Activated B cell treated with CpG ODN at 0.5 μM for 24 hours (primary cell): ENCODE measurements at regions of chr18 and their contacts with region 1.

Region 1: DNA sequence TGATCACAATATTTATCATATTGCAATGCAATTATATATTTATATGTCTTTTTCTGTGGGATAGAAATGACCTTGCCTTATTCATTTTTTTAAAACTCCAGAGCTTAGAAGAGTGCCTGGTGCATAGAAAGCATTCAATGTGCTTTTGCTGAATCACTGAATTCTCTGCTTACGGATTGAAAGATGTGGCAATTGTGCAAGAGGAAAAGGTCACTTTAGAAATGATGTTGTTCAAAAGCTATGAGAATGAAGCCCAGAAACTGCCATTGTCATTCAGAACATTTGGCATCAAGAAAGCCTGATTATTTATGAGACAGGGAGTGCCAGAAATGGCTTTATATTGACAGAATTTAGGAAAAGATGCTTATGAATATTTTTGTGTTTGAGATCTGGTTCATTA is 678.6 kb upstream of the CDH2 start:
- DNase-seq: no peak
- ATAC-seq: no peak
- H3K4me3 Mint-ChIP-seq: no peak overlapping the region
- H3K27ac Mint-ChIP-seq: no peak overlapping the region
- H3K4me1 Mint-ChIP-seq: no peaks in the 10 kb centered on the region
- H3K27me3 Mint-ChIP-seq: no peaks in the 10 kb centered on the region
- CTCF ChIP-seq: no peak

Region 2: DNA sequence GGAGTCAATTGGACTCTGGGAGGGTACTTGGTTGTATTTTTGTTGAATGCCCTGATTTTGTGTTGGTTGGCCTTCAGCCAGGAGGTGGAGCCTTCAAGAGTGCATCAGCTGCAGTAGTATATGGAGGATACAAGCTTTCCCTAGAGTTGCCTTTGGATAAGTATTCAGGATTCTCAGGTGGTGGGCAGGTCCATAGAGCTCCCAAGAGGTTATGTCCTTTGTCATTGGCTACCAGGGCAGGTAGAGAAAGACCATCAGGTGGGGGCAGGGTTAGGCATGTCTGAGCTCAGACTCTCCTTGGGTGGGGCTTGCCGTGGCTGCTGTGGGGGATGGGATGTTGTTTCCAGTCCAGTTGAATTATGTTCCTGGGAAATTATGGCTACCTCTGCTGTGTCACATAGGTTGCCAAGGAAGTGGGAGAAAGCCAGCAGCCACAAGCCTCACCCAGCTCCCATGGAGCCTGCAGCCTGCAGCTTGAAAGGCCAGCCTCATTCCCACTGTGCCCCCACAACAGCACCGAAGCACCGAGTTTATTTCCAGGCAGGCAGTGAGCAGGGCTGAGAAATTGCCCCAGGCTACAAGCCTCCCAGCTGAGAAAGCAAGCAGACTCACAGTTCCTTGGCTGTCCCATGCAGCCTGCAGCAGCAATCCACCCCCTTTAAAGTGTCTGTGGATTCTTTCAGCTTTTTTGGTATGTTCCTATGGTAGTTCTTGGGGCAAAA is 1631.8 kb before region 1 on chr18:
- CTCF ChIA-PET with region 1: no interaction called
- POLR2A ChIA-PET with region 1: no interaction called
- intact Hi-C with region 1: no loop called
- DNase-seq: no peak
- ATAC-seq: no peak
- H3K4me3 Mint-ChIP-seq: no peak overlapping the region
- H3K27ac Mint-ChIP-seq: no peak overlapping the region
- H3K4me1 Mint-ChIP-seq: no peaks in the 10 kb centered on the region
- H3K27me3 Mint-ChIP-seq: no peaks in the 10 kb centered on the region
- CTCF ChIP-seq: no peak

Region 3: GRCh38 chr18:28512357-28512756 is 343.2 kb before region 1 on chr18:
- CTCF ChIA-PET with region 1: no interaction called
- POLR2A ChIA-PET with region 1: no interaction called
- intact Hi-C with region 1: no loop called
- DNase-seq: no peak
- ATAC-seq: no peak
- H3K4me3 Mint-ChIP-seq: no peak overlapping the region
- H3K27ac Mint-ChIP-seq: no peak overlapping the region
- H3K4me1 Mint-ChIP-seq: no peaks in the 10 kb centered on the region
- H3K27me3 Mint-ChIP-seq: no peaks in the 10 kb centered on the region
- CTCF ChIP-seq: no peak

Region 4: GRCh38 chr18:28916456-28916855 is 60.9 kb after region 1 on chr18:
- CTCF ChIA-PET with region 1: no interaction called
- POLR2A ChIA-PET with region 1: no interaction called
- intact Hi-C with region 1: loop called (anchors 2 kb)
- DNase-seq: no peak
- ATAC-seq: no peak
- H3K4me3 Mint-ChIP-seq: no peak overlapping the region
- H3K27ac Mint-ChIP-seq: no peak overlapping the region
- H3K4me1 Mint-ChIP-seq: no peaks in the 10 kb centered on the region
- H3K27me3 Mint-ChIP-seq: no peaks in the 10 kb centered on the region
- CTCF ChIP-seq: no peak

Region 5: DNA sequence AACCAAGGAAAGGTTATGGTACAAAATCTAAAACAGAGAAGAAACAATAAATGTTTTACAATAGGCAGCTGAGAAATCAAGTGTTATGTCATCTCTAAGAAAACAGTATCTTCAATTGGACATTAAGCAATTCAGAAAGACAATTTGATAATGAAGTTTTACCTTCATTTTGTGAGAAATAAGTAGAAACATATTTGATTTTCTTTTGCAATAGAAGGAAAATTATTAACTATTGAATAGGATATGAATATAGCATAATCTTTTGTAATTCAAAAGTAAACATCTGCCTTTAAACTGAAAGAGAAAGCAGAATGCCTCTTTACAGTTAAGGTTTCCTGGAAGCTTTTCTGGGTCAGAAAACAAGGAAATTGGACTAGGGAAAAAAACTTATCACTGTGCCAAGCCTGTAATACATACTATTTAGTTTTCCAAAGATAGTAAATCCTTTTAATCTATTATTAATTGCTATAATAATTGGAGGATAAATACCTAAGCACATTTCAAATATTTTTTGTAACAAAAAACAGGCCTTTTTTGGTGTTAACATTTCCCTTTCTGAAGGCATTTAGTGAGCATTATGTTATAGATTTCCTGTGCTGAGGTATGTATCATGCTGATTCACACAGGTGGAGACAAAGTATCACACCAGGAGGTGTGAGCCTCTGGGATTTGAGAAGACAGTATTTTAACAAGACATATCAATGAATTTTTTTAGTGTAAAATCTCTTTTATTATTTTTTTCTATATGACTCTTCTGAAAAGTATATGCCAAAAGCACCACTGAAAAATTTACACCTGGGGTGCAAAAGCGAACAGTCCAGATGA is 268.4 kb after region 1 on chr18:
- CTCF ChIA-PET with region 1: no interaction called
- POLR2A ChIA-PET with region 1: no interaction called
- intact Hi-C with region 1: no loop called
- DNase-seq: no peak
- ATAC-seq: no peak
- H3K4me3 Mint-ChIP-seq: no peak overlapping the region
- H3K27ac Mint-ChIP-seq: no peak overlapping the region
- H3K4me1 Mint-ChIP-seq: no peaks in the 10 kb centered on the region
- H3K27me3 Mint-ChIP-seq: no peaks in the 10 kb centered on the region
- CTCF ChIP-seq: no peak